ENCODE measurements at regions of chr9 and their contacts with region 1.

Region 1: GRCh38 chr9:130701056-130702022 is 7.8 kb downstream of the EXOSC2 start:
- DNase-seq: peak; percentile 67 to 85 (median 79)
- H3K4me3 ChIP-seq: no peak overlapping the region
- H3K27ac ChIP-seq: no peak overlapping the region
- H3K4me1 ChIP-seq: no peaks in the 10 kb centered on the region
- H3K27me3 ChIP-seq: no peaks in the 10 kb centered on the region
- CTCF ChIP-seq: peak; percentile 80 to 94 (median 86)
- POLR2A ChIP-seq: no peak

Region 2: GRCh38 chr9:130940693-130941576 is 239.6 kb after region 1 on chr9:
- intact Hi-C with region 1: loop called (anchors 5 to 10 kb)
- DNase-seq: peak; percentile 52 to 83 (median 76)
- H3K4me3 ChIP-seq: no peak overlapping the region
- H3K27ac ChIP-seq: no peak overlapping the region
- H3K4me1 ChIP-seq: peaks cover 20 to 27% of the 10 kb centered on the region in 2 donors
- H3K27me3 ChIP-seq: peaks cover 39% of the 10 kb centered on the region
- CTCF ChIP-seq: peak; percentile 66 to 88 (median 82)
- POLR2A ChIP-seq: no peak

Region 3: DNA sequence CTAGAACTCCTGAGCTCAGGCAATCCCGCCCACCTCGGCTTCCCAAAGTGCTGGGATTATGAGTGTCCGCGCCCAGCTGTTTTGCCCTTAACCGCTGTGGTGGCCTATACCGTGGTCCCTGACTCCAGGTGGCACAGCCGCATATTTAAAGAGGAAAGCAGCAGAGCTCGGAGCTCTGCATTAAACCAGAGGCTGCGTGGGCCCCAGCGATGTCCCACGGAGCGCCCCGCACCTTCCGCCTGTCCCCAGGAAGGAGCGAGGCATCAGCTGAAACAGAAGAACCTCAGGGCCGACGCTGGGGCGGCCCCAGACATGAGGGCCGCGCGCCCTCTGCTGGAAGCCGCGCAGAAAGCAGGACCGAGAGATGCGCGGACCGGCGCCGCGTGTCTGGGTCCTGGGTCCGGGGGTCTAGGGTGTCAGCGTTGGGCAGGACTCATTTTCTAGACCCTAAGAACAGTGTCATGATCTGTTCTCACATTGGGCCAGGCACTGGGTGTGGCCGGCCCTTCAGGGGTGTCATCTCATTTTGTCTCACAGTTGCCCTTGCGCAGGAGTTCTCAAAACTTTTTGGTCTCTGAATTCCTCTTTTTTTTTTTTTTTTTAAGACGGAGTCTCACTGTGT is 345.4 kb after region 1 on chr9:
- intact Hi-C with region 1: loop called in 1 of 2 experiments (anchors 5 kb)
- DNase-seq: peak; percentile 61 to 79 (median 70)
- H3K4me3 ChIP-seq: no peak overlapping the region
- H3K27ac ChIP-seq: no peak overlapping the region
- H3K4me1 ChIP-seq: no peaks in the 10 kb centered on the region
- H3K27me3 ChIP-seq: no peaks in the 10 kb centered on the region
- CTCF ChIP-seq: peak; percentile 79 to 92 (median 86)
- POLR2A ChIP-seq: no peak

Measured in adrenal gland (tissue), 19 donors.